ENCODE measurements at regions of chr3 and their contacts with region 1.

Region 1: GRCh38 chr3:132399054-132399929 is 18.0 kb upstream of the DNAJC13 start:
- H3K4me3 Mint-ChIP-seq: no peak overlapping the region
- H3K27ac Mint-ChIP-seq: no peak overlapping the region
- H3K4me1 Mint-ChIP-seq: no peaks in the 10 kb centered on the region
- H3K27me3 Mint-ChIP-seq: no peaks in the 10 kb centered on the region

Region 2: DNA sequence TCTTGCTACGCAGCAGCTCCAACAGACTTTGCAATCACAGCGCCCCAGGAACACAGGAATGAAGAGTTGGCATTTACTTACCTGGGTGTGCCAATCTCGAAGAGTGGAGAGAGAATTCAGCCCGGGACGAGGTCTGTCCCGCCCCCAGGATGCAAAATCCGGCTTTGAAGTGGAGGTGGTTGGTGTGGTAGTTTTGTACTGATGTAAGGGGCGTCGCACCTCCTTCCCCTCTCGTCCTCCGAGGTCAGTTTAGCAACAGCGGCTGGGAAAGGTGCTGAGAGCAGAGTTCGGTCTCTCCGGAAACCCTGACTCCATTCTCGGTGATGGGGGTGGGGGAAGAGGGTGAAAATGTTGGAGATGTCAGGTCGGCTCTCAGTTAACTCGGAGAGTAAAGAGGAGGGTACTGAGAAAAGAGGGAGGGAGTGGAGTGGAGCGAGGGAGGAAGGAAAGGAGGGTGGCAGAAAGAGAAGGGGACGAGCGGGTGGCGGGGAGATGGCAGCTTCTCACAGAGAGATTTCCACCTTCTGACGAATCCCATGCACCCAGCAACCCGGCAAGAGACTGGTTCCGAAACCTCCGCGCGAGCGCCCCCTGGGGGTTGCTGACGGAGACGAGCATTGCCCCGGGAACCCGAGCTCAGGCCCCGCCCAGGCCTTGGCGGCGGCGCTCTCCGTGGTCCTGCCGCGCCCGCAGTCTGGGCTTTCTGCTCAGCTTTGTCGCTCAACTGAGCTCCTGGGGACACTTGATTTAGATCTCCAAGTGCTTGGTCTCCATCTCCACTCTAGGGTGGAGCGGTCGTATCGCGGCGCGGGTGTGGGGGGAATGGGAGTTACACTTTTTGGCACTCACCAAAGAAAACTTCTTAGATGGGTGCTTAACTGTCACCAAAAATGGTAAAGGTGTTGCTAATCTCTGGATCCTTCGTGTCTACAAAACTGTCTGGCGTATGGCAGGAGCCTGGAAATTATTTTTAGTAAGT is 364.5 kb before region 1 on chr3 and contains the start of gene CPNE4:
- intact Hi-C with region 1: loop called (anchors 10 kb)
- H3K4me3 Mint-ChIP-seq: peak within 1 kb of the TSS; percentile 5
- H3K27ac Mint-ChIP-seq: no peak within 1 kb of the TSS
- H3K4me1 Mint-ChIP-seq: peaks cover 18% of the 10 kb centered on the region
- H3K27me3 Mint-ChIP-seq: peaks cover 51% of the 10 kb centered on the region

Region 3: DNA sequence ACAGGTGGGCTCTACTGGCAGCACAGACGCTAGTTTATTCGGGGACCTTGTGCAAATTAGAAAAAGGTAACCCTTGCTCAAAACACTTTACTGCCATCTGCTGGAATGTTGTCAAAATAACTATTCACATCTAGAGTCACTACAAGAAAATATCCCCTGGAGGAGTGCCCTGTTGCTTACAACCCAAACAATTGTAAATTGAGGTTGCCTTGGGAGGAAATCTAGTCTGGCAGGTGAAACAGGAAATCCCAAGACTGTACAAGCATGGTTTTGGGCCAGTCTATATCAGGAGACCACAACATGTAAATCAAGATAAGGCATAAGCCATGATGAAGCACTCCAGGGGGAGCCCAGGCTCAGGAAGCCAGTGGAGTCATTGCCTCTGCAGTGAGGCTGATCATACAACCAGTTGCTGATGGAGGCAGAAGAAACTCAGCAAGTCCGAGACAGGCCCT is 218.9 kb before region 1 on chr3:
- intact Hi-C with region 1: no loop called
- H3K4me3 Mint-ChIP-seq: no peak overlapping the region
- H3K27ac Mint-ChIP-seq: no peak overlapping the region
- H3K4me1 Mint-ChIP-seq: peaks cover 4% of the 10 kb centered on the region
- H3K27me3 Mint-ChIP-seq: peaks cover 2% of the 10 kb centered on the region

Region 4: GRCh38 chr3:132253262-132253878 is 145.9 kb before region 1 on chr3:
- intact Hi-C with region 1: loop called (anchors 1 kb)
- H3K4me3 Mint-ChIP-seq: no peak overlapping the region
- H3K27ac Mint-ChIP-seq: no peak overlapping the region
- H3K4me1 Mint-ChIP-seq: peaks cover 7% of the 10 kb centered on the region
- H3K27me3 Mint-ChIP-seq: no peaks in the 10 kb centered on the region

Region 5: GRCh38 chr3:132352541-132353143 is 46.6 kb before region 1 on chr3:
- intact Hi-C with region 1: loop called (anchors 1 kb)
- H3K4me3 Mint-ChIP-seq: no peak overlapping the region
- H3K27ac Mint-ChIP-seq: no peak overlapping the region
- H3K4me1 Mint-ChIP-seq: no peaks in the 10 kb centered on the region
- H3K27me3 Mint-ChIP-seq: no peaks in the 10 kb centered on the region

Measured in dendritic cell treated with granulocyte-macrophage colony-stimulating factor and Interleukin-4, amounts not matched to agents 40 ng/mL and 50 ng/mL, for 4 days (primary cell).